Activated CD4-positive, alpha-beta memory T cell treated with anti-CD3 and anti-CD28 coated beads for 36 hours (primary cell): ENCODE measurements at regions of chr6 and their contacts with region 1.

Region 1: DNA sequence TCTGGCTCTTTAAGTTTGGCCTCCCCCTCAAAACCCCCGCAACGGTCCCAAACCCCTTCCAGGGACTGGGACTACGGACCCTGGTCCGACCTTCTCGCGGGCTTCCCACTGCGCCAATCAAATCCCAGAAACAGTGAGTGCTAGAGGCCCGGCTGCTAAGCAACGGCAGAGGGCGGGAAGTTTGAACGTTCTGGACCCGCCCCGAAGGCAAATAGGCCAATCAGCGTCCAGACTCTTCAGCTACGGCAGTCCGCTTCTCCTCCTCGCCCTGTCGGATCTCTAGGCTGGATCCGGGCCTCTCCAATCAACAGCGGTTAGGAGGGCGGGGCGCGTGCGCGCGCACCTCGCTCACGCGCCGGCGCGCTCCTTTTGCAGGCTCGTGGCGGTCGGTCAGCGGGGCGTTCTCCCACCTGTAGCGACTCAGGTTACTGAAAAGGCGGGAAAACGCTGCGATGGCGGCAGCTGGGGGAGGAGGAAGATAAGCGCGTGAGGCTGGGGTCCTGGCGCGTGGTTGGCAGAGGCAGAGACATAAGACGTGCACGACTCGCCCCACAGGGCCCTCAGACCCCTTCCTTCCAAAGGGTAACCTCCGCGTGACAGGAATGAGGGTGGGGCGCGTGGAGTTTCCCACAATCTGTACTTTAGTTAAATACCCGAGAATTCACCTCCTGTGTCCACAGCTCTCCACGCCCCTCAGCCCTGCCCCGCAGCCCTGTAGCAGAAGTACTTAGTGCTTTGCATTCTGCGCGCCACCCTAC is at the start of gene MSH5:
- DNase-seq: peak; percentile 99
- H3K4me3 Mint-ChIP-seq: peak within 1 kb of the TSS; percentile 94
- H3K27ac Mint-ChIP-seq: peak within 1 kb of the TSS; percentile 91
- H3K4me1 Mint-ChIP-seq: peaks cover 48% of the 10 kb centered on the region
- H3K27me3 Mint-ChIP-seq: no peaks in the 10 kb centered on the region
- total RNA-seq, gene MSH5: 80.9 to 83.8 TPM

Region 2: GRCh38 chr6:30571075-30571768 is 1168.6 kb before region 1 on chr6 and contains the start of gene ABCF1:
- CTCF ChIA-PET with region 1: no interaction called
- POLR2A ChIA-PET with region 1: no interaction called
- intact Hi-C with region 1: loop called (anchors 10 kb)
- DNase-seq: peak; percentile 99
- H3K4me3 Mint-ChIP-seq: peak within 1 kb of the TSS; percentile 94
- H3K27ac Mint-ChIP-seq: peak within 1 kb of the TSS; percentile 94
- H3K4me1 Mint-ChIP-seq: peaks cover 60% of the 10 kb centered on the region
- H3K27me3 Mint-ChIP-seq: no peaks in the 10 kb centered on the region
- total RNA-seq, gene ABCF1: 87.0 to 87.1 TPM

Region 3: GRCh38 chr6:31652925-31653718 is 86.7 kb before region 1 on chr6:
- CTCF ChIA-PET with region 1: no interaction called
- POLR2A ChIA-PET with region 1: interaction called, 3 read pairs
- intact Hi-C with region 1: loop called (anchors 1 kb)
- DNase-seq: peak; percentile 92
- H3K4me3 Mint-ChIP-seq: peak overlapping the region; percentile 94
- H3K27ac Mint-ChIP-seq: peak overlapping the region; percentile 99
- H3K4me1 Mint-ChIP-seq: peaks cover 54% of the 10 kb centered on the region
- H3K27me3 Mint-ChIP-seq: no peaks in the 10 kb centered on the region

Region 4: GRCh38 chr6:31702819-31703522 is 36.8 kb before region 1 on chr6 and contains the start of gene ABHD16A:
- CTCF ChIA-PET with region 1: no interaction called
- POLR2A ChIA-PET with region 1: interaction called, 7 read pairs
- intact Hi-C with region 1: loop called (anchors 1 kb)
- DNase-seq: peak; percentile 99
- H3K4me3 Mint-ChIP-seq: peak within 1 kb of the TSS; percentile 99
- H3K27ac Mint-ChIP-seq: peak within 1 kb of the TSS; percentile 97
- H3K4me1 Mint-ChIP-seq: peaks cover 18% of the 10 kb centered on the region
- H3K27me3 Mint-ChIP-seq: no peaks in the 10 kb centered on the region
- total RNA-seq, gene ABHD16A: 29.1 to 29.6 TPM

Region 5: DNA sequence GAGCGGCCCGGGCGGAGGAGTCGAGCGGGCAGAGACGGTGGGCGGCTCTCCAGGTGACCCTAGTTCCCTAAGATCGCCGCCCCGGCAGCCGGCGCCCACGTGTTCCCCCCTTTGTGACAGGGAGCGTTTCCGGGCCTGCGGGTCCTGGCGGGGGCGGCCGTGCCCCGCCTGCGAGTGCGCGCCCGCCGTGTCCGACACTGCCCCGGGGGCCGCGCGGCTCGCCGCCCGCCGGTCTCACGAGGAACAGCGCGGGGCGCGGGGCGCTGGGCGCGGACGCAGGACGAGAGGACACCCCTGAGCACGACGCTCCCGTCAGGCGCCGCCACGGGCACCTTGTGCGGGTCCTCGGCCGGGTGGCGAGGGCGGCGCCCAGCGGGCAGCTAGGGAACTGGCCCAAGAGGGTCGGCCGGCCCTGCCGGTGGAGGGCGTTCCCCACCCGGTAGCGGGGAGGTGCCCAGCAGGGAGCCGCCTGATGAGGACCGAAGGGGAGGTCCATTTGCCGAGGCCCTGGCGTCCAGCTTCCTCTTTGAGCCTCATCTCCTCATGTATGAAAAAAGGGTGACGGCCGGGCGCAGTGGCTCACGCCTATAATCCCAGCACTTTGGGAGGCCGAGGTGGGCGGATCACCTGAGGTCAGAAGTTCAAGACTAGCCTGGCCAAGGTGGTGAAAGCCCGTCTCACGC is 55.9 kb after region 1 on chr6 and contains the start of gene VARS1:
- CTCF ChIA-PET with region 1: interaction called, 15 read pairs
- POLR2A ChIA-PET with region 1: interaction called, 3 read pairs
- intact Hi-C with region 1: no loop called
- DNase-seq: peak; percentile 91
- H3K4me3 Mint-ChIP-seq: peak within 1 kb of the TSS; percentile 98
- H3K27ac Mint-ChIP-seq: peak within 1 kb of the TSS; percentile 91
- H3K4me1 Mint-ChIP-seq: peaks cover 39% of the 10 kb centered on the region
- H3K27me3 Mint-ChIP-seq: no peaks in the 10 kb centered on the region
- total RNA-seq, gene VARS1: 141 to 153 TPM

Region 6: DNA sequence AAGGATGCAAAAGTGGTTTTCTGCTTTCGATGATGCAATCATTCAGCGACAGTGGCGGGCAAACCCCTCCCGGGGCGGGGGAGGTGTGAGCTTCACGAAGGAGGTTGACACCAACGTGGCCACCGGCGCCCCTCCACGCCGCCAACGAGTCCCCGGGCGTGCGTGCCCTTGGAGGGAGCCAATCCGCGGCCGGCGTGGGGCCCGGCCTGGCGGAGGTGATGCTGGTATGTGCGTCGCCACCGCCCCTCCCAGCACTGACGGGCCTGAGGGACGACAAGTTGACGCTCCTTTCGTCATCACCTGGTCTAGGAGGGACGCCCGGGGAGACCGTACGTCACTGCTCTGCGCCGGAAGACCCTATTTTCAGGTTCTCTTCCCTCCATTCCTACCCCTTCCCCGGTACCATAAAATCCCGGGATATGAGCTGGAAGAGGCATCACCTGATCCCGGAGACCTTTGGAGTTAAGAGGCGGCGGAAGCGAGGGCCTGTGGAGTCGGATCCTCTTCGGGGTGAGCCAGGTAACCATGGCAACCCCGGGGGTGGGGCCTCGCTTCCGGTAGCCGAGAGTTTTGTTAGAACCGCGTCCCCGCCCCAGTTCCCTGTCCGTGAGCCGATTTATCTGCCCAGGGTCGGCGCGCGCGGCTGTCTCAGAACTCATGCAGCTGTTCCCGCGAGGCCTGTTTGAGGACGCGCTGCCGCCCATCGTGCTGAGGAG is 232.3 kb after region 1 on chr6 and contains the start of gene DXO:
- CTCF ChIA-PET with region 1: no interaction called
- POLR2A ChIA-PET with region 1: no interaction called
- intact Hi-C with region 1: loop called (anchors 10 kb)
- DNase-seq: peak; percentile 99
- H3K4me3 Mint-ChIP-seq: peak within 1 kb of the TSS; percentile 95
- H3K27ac Mint-ChIP-seq: peak within 1 kb of the TSS; percentile 100
- H3K4me1 Mint-ChIP-seq: peaks cover 39% of the 10 kb centered on the region
- H3K27me3 Mint-ChIP-seq: no peaks in the 10 kb centered on the region
- total RNA-seq, gene DXO: 10.8 to 12.3 TPM